GM12878 (cell line): ENCODE measurements at regions of chr5 and their contacts with region 1.

Region 1: GRCh38 chr5:151164686-151165392 is 7.3 kb upstream of the ANXA6 start:
- DNase-seq: peak; percentile 83
- ATAC-seq: peak; percentile 98
- H3K4me3 ChIP-seq: no peak overlapping the region
- H3K27ac ChIP-seq: no peak overlapping the region
- H3K4me1 ChIP-seq: peaks cover 6% of the 10 kb centered on the region; the same call in 1 of the 2 replicates
- H3K27me3 ChIP-seq: no peaks in the 10 kb centered on the region
- CTCF ChIP-seq: peak; percentile 87 to 98 (median 92); a peak in 5 of 6 replicates
- EP300 ChIP-seq: no peak
- POLR2A ChIP-seq: no peak
- RAD21 ChIP-seq: peak; percentile 100

Region 2: GRCh38 chr5:150789943-150790611 is 374.8 kb before region 1 on chr5:
- CTCF ChIA-PET with region 1: no interaction called
- POLR2A ChIA-PET with region 1: no interaction called
- RAD21 ChIA-PET with region 1: no interaction called
- SMC1A ChIA-PET with region 1: no interaction called
- in situ Hi-C with region 1: loop called (anchors 10 kb)
- intact Hi-C with region 1: no loop called
- DNase-seq: peak; percentile 54
- ATAC-seq: peak; percentile 98
- H3K4me3 ChIP-seq: 0 out of 2 replicates have a peak overlapping the region, but pooled peaks have one; percentile 31
- H3K27ac ChIP-seq: peak overlapping the region; percentile 60
- H3K4me1 ChIP-seq: peaks cover 22% of the 10 kb centered on the region
- H3K27me3 ChIP-seq: no peaks in the 10 kb centered on the region
- CTCF ChIP-seq: no peak
- EP300 ChIP-seq: peak in 1 of 2 experiments; percentile 38; a peak in 1 of 4 replicates
- POLR2A ChIP-seq: no peak
- RAD21 ChIP-seq: no peak

Region 3: DNA sequence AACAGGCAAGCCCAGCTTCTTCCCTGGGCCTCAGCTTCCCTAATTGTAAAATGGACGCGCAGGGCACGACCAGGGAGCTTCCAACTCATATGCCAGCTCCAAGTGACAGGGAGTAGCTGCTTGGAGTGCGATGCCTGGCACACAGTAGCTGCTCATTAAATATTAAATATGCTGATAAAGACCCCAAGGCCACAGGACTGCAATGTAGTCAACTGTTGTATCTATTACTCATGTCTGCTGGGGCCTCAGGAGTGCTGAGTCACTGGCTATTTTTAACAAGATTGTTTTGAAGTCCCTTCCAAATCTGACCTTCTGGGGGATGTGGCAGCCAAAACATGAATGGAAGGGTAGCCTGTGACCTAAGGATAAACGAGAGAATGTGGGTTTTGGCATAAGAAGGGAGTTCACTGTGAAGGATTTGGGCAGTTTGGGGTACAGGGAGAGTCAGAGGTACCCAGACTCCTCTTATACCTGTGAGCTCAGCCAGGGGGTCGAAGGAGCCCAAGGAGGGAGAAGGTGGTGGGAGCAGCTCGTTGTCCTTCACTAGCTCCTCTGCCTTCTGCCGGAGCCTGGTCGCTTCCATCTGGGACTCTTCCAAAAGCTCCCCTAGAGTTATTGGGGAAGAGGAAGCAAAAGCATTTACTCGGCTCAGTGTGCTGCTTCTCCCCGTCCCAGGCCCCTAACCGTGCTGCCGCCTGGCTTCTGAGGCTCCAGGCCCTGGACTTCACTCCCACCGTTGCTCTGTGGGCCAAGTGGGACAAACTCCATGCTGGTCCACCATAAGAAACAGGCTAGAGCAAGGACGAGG is 101.5 kb before region 1 on chr5:
- CTCF ChIA-PET with region 1: interaction called, 12 read pairs
- POLR2A ChIA-PET with region 1: no interaction called
- RAD21 ChIA-PET with region 1: interaction called, 4 read pairs
- SMC1A ChIA-PET with region 1: interaction called, 4 read pairs
- in situ Hi-C with region 1: no loop called
- intact Hi-C with region 1: no loop called
- DNase-seq: no peak
- ATAC-seq: no peak
- H3K4me3 ChIP-seq: no peak overlapping the region
- H3K27ac ChIP-seq: no peak overlapping the region; the same call in 1 of the 2 replicates
- H3K4me1 ChIP-seq: peaks cover 82% of the 10 kb centered on the region
- H3K27me3 ChIP-seq: no peaks in the 10 kb centered on the region
- CTCF ChIP-seq: no peak
- EP300 ChIP-seq: no peak
- POLR2A ChIP-seq: no peak; the same call in 1 of the 2 replicates
- RAD21 ChIP-seq: no peak

Region 4: GRCh38 chr5:151126199-151126645 is 38.6 kb before region 1 on chr5:
- CTCF ChIA-PET with region 1: interaction called, 1,107 read pairs
- POLR2A ChIA-PET with region 1: interaction called, 21 read pairs
- RAD21 ChIA-PET with region 1: interaction called, 306 read pairs
- SMC1A ChIA-PET with region 1: interaction called, 1,132 read pairs
- in situ Hi-C with region 1: loop called (anchors 5 kb)
- intact Hi-C with region 1: loop called (anchors 1 kb)
- DNase-seq: peak; percentile 66
- ATAC-seq: peak; percentile 65
- H3K4me3 ChIP-seq: no peak overlapping the region
- H3K27ac ChIP-seq: peak overlapping the region; percentile 75
- H3K4me1 ChIP-seq: peaks cover 65% of the 10 kb centered on the region
- H3K27me3 ChIP-seq: no peaks in the 10 kb centered on the region
- CTCF ChIP-seq: peak; percentile 84 to 92 (median 87)
- EP300 ChIP-seq: no peak
- POLR2A ChIP-seq: peak; percentile 50; the same call in 1 of the 2 replicates
- RAD21 ChIP-seq: peak; percentile 93

Region 5: DNA sequence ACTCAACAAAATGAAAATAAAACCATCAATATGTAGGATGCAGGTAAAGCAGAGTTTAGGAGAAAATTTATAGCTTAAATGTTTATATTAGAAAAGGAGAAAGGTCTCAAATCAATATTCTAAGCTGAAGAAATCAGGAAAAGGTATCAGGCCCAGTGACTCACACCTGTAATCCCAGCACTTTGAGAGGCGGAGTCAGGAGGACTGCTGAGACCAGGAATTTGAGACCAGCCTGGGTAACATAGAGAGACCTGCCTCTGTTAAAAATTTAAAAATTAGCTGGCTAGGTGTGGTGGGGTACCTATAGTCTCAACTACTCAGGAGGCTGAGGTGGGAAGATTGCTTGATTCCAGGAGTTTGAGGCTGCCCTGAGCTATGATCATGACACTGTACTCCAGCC is 26.8 kb after region 1 on chr5:
- CTCF ChIA-PET with region 1: interaction called, 18 read pairs
- POLR2A ChIA-PET with region 1: no interaction called
- RAD21 ChIA-PET with region 1: interaction called, 5 read pairs
- SMC1A ChIA-PET with region 1: interaction called, 7 read pairs
- in situ Hi-C with region 1: no loop called
- intact Hi-C with region 1: no loop called
- DNase-seq: no peak
- ATAC-seq: no peak
- H3K4me3 ChIP-seq: no peak overlapping the region
- H3K27ac ChIP-seq: no peak overlapping the region
- H3K4me1 ChIP-seq: peaks cover 11% of the 10 kb centered on the region
- H3K27me3 ChIP-seq: no peaks in the 10 kb centered on the region
- CTCF ChIP-seq: no peak
- EP300 ChIP-seq: no peak
- POLR2A ChIP-seq: no peak
- RAD21 ChIP-seq: no peak

Region 6: GRCh38 chr5:151298063-151298855 is 133.4 kb after region 1 on chr5:
- CTCF ChIA-PET with region 1: interaction called, 40 read pairs
- POLR2A ChIA-PET with region 1: interaction called, 3 read pairs
- RAD21 ChIA-PET with region 1: interaction called, 15 read pairs
- SMC1A ChIA-PET with region 1: interaction called, 49 read pairs
- in situ Hi-C with region 1: no loop called
- intact Hi-C with region 1: loop called (anchors 2 kb)
- DNase-seq: peak; percentile 26
- ATAC-seq: peak; percentile 98
- H3K4me3 ChIP-seq: no peak overlapping the region
- H3K27ac ChIP-seq: no peak overlapping the region
- H3K4me1 ChIP-seq: no peaks in the 10 kb centered on the region
- H3K27me3 ChIP-seq: no peaks in the 10 kb centered on the region; a peak in 1 of 4 replicates
- CTCF ChIP-seq: peak; percentile 72 to 82 (median 75)
- EP300 ChIP-seq: no peak
- POLR2A ChIP-seq: no peak
- RAD21 ChIP-seq: peak; percentile 83